BJ (cell line): ENCODE measurements at regions of chr10 and their contacts with region 1.

Region 1: DNA sequence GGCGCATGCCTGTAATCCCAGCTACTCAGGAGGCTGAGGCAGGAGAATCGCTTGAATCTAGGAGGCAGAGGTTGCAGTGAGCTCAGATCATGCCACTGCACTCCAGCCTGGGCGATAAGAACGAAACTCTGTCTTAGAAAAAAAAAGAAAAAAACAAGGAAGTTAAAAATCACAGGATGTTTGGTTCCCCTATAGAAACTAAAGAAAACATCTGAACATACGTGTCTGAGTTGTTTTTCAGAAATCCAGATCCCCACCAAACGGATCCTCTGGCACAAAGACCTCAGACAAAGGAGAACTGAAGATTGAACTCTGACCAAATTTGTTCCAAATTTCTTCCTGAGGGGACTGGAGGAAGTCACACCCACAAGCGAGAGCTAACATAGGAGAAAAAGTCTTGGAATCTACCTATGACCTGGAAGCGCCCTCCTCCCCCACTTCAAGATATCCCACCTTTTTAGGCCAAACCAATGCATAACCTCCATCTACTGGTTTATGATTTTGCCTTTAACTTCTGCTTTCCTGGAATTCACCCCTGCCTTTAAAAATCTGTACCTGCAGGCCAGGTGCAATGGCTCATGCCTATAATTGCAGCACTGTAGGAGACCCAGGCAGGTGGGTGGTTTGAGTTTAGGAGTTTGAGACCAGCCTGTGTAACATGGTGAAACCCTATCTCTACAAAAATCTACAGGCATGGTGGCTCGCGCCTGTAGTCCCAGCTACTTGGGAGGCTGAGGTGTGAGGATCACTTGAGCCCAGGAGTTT is 19.7 kb upstream of the SIRT1 start:
- DNase-seq: no peak
- H3K4me3 ChIP-seq: no peak overlapping the region
- H3K27me3 ChIP-seq: no peaks in the 10 kb centered on the region
- CTCF ChIP-seq: no peak

Region 2: GRCh38 chr10:67618116-67618515 is 246.7 kb before region 1 on chr10:
- CTCF ChIA-PET with region 1: no interaction called
- POLR2A ChIA-PET with region 1: no interaction called
- DNase-seq: no peak
- H3K4me3 ChIP-seq: no peak overlapping the region
- H3K27me3 ChIP-seq: no peaks in the 10 kb centered on the region
- CTCF ChIP-seq: no peak

Region 3: GRCh38 chr10:67837541-67838314 is 27.1 kb before region 1 on chr10 and contains the start of gene DNAJC12:
- CTCF ChIA-PET with region 1: no interaction called
- POLR2A ChIA-PET with region 1: no interaction called
- DNase-seq: no peak
- H3K4me3 ChIP-seq: no peak within 1 kb of the TSS
- H3K27me3 ChIP-seq: no peaks in the 10 kb centered on the region
- CTCF ChIP-seq: no peak
- polyA plus RNA-seq, gene DNAJC12: 0.13 and 0.42 TPM in 2 replicates

Region 4: DNA sequence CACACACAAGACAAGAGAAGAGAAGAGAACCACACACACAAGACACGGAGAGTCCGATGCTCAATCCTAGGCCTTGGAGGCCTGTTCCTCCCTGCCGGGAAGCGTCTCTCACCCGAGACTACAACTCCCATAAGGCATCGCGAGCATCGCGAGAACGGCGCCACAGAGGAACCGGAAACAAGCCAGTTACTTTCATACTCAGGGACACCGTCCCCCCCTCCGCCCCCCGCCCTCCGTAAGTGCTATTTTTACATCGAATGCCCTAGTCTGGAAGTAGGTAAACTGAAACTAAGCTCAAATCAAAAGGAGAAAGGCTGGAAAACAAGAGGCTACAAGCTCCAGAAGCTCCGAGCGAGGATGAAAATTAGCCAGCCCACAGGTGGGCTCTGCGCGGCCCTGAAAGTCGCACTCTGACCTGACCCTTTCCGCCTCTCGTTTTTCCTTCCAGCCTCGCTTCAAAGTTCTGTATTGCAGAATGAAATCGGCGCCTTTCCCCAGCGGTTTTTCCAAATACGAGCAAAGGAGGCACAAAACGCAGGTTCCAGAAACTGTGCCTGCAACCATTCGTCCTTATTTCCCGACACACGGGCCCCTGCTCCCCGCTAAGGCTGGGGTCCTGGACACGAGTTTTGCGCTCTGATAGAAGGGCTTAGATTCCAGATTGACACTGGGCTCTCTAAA is 15.3 kb before region 1 on chr10:
- CTCF ChIA-PET with region 1: interaction called, 44 read pairs
- POLR2A ChIA-PET with region 1: no interaction called
- DNase-seq: peak; percentile 72
- H3K4me3 ChIP-seq: peak overlapping the region; percentile 56
- H3K27me3 ChIP-seq: no peaks in the 10 kb centered on the region
- CTCF ChIP-seq: no peak